ENCODE measurements at regions of chr9 and their contacts with region 1.

Region 1: GRCh38 chr9:114587385-114588202 is at the start of gene ATP6V1G1:
- DNase-seq: peak; percentile 99
- H3K4me3 Mint-ChIP-seq: peak within 1 kb of the TSS; percentile 94
- H3K27ac Mint-ChIP-seq: peak within 1 kb of the TSS; percentile 92
- H3K4me1 Mint-ChIP-seq: peaks cover 49% of the 10 kb centered on the region
- H3K27me3 Mint-ChIP-seq: no peaks in the 10 kb centered on the region
- total RNA-seq, gene ATP6V1G1: 92.4 to 94.2 TPM

Region 2: GRCh38 chr9:114405294-114406034 is 182.1 kb before region 1 on chr9:
- CTCF ChIA-PET with region 1: interaction called, 31 read pairs
- POLR2A ChIA-PET with region 1: interaction called, 3 read pairs
- DNase-seq: peak; percentile 84
- H3K4me3 Mint-ChIP-seq: no peak overlapping the region
- H3K27ac Mint-ChIP-seq: no peak overlapping the region
- H3K4me1 Mint-ChIP-seq: peaks cover 16% of the 10 kb centered on the region
- H3K27me3 Mint-ChIP-seq: no peaks in the 10 kb centered on the region

Region 3: GRCh38 chr9:114574438-114574837 is 13.2 kb before region 1 on chr9:
- CTCF ChIA-PET with region 1: interaction called, 8 read pairs
- POLR2A ChIA-PET with region 1: interaction called, 10 read pairs
- DNase-seq: no peak
- H3K4me3 Mint-ChIP-seq: no peak overlapping the region
- H3K27ac Mint-ChIP-seq: no peak overlapping the region
- H3K4me1 Mint-ChIP-seq: no peaks in the 10 kb centered on the region
- H3K27me3 Mint-ChIP-seq: peaks cover 8% of the 10 kb centered on the region

Region 4: GRCh38 chr9:114611516-114612271 is 24.1 kb after region 1 on chr9:
- CTCF ChIA-PET with region 1: interaction called, 32 read pairs
- POLR2A ChIA-PET with region 1: interaction called, 109 read pairs
- DNase-seq: peak; percentile 51
- H3K4me3 Mint-ChIP-seq: peak overlapping the region; percentile 84
- H3K27ac Mint-ChIP-seq: peak overlapping the region; percentile 76
- H3K4me1 Mint-ChIP-seq: peaks cover 49% of the 10 kb centered on the region
- H3K27me3 Mint-ChIP-seq: no peaks in the 10 kb centered on the region

Region 5: DNA sequence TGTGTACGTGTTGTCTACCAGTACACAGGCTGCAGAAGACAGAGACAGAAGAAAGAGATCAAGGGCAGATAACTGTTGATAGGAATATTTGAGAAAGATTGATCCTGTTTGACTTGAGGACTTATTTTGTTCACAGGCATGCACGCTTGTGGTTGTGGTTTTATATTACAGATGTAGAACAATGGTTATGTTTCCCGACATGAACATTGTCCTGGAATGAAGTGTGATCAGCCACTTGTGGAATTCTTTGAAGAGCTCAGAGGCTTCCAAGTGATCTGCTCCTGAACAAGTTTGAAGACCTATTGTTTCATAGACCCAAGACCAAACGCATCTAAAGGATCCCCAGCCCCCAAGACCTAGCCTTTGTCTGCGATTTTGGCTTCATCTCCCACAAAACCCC is 56.3 kb after region 1 on chr9:
- CTCF ChIA-PET with region 1: interaction called, 11 read pairs
- POLR2A ChIA-PET with region 1: no interaction called
- DNase-seq: no peak
- H3K4me3 Mint-ChIP-seq: no peak overlapping the region
- H3K27ac Mint-ChIP-seq: no peak overlapping the region
- H3K4me1 Mint-ChIP-seq: no peaks in the 10 kb centered on the region
- H3K27me3 Mint-ChIP-seq: no peaks in the 10 kb centered on the region

Region 6: DNA sequence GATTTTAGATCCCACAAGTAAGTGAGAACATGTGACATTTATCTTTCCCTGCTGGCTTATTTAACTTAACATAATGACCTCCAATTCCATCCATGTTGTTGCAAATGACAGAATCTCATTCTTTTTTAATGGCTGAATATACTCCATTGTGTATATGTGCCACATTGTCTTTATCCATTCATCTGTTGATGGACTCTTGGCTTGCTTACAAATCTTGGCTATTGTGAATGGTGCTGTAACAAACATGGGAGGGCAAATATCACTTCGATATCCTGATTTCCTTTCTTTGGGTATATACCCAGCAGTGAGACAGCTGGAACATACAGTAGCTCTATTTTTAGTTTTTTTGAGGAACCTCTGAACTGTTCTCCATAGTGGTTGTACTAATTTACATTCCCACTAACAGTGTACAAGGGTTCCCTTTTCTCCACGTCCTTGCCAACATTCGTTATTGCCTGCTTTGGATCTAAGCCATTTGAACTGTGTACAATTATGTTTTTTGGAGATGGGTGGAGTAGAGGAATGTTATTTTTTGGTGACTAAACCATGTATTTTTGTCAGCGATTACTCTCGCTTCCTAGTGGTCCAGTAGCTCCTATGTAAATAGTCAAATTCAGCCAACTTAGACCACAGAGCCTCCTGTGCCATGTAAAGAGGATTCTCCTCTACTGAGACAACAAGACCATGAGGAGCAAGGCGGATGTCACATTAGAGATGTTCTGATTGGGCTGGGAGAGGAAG is 157.7 kb after region 1 on chr9:
- CTCF ChIA-PET with region 1: no interaction called
- POLR2A ChIA-PET with region 1: no interaction called
- DNase-seq: no peak
- H3K4me3 Mint-ChIP-seq: no peak overlapping the region
- H3K27ac Mint-ChIP-seq: no peak overlapping the region
- H3K4me1 Mint-ChIP-seq: peaks cover 4% of the 10 kb centered on the region
- H3K27me3 Mint-ChIP-seq: peaks cover 10% of the 10 kb centered on the region